Lower leg skin (tissue), 4 donors: ENCODE measurements at regions of chr4 and their contacts with region 1.

Region 1: DNA sequence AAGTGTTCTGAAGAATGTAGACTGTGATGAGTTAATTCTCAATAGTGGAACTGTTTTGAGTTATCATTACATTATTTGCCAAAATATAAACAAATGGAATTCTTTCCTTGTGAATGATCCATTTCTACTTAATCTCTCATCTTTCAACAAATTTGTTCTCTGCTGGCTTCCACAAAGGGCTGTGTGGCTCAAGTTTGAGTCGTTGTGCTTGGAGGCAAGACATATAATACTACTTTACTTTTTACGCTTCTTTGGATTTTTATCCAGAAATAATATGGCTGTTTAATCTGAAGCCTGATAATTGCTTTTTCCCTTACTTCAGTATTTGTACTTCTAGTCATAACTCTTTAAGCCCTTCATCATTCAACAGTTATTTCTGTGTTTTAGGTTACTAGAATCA is 169.5 kb downstream of the ARHGAP10 start:
- DNase-seq: no peak
- H3K4me3 ChIP-seq: no peak overlapping the region
- CTCF ChIP-seq: no peak
- POLR2A ChIP-seq: no peak

Region 2: GRCh38 chr4:147825451-147826287 is 75.7 kb before region 1 on chr4:
- intact Hi-C with region 1: loop called (anchors 2 kb)
- DNase-seq: no peak
- H3K4me3 ChIP-seq: no peak overlapping the region
- CTCF ChIP-seq: no peak
- POLR2A ChIP-seq: no peak